Natural killer cell (primary cell): ENCODE measurements at regions of chr4 and their contacts with region 1.

Region 1: DNA sequence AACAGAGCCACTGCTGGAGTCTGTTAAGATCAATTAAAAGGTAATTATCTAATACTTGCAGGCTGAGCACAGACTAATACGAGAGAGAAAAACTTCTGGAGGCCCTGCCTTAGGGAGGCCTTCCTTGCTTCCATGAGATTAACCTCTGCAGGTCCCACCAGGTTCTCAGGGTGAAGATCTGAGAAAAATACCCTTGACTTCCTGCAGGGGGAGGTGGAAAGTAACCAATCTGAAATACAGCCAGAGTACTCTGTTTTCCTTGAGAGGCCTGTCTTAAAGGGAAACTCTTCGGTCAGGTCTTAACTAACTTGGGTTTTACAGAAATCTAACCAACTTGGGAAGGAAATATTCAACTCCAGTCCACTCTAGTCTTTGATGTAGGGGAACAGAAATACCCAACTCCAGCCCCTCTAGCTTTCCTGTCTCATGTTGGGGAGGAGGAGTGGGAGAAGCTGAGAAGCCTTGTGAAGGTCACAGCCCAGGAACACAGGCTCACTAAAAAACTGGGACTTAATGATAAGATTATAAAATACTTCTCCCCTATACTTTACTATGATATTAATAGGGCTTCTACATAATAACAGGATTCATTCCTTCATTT is 77.1 kb downstream of the TBCK start:
- DNase-seq: peak in 1 of 2 donors; percentile 35
- ATAC-seq: peak in 2 of 3 donors; percentile 52 to 53
- H3K4me3 ChIP-seq: no peak overlapping the region
- H3K4me3 Mint-ChIP-seq: no peak overlapping the region
- H3K27ac ChIP-seq: no peak overlapping the region
- H3K27ac Mint-ChIP-seq: no peak overlapping the region
- H3K4me1 ChIP-seq: no peaks in the 10 kb centered on the region
- H3K4me1 Mint-ChIP-seq: no peaks in the 10 kb centered on the region
- H3K27me3 ChIP-seq: no peaks in the 10 kb centered on the region
- H3K27me3 Mint-ChIP-seq: no peaks in the 10 kb centered on the region
- CTCF ChIP-seq: peak; percentile 56

Region 2: GRCh38 chr4:105831189-105831588 is 407.7 kb before region 1 on chr4:
- intact Hi-C with region 1: no loop called
- DNase-seq: no peak
- ATAC-seq: no peak
- H3K4me3 ChIP-seq: no peak overlapping the region
- H3K4me3 Mint-ChIP-seq: no peak overlapping the region
- H3K27ac ChIP-seq: no peak overlapping the region
- H3K27ac Mint-ChIP-seq: no peak overlapping the region
- H3K4me1 ChIP-seq: no peaks in the 10 kb centered on the region
- H3K4me1 Mint-ChIP-seq: peaks cover 0 to under 1% of the 10 kb centered on the region in 2 donors
- H3K27me3 ChIP-seq: no peaks in the 10 kb centered on the region
- H3K27me3 Mint-ChIP-seq: no peaks in the 10 kb centered on the region
- CTCF ChIP-seq: no peak

Region 3: GRCh38 chr4:107736924-107737448 is 1498.1 kb after region 1 on chr4:
- intact Hi-C with region 1: loop called (anchors 10 kb)
- DNase-seq: peak; percentile 21 to 76
- ATAC-seq: peak; percentile 57 to 77 (median 76)
- H3K4me3 ChIP-seq: no peak overlapping the region
- H3K4me3 Mint-ChIP-seq: no peak overlapping the region
- H3K27ac ChIP-seq: no peak overlapping the region
- H3K27ac Mint-ChIP-seq: no peak overlapping the region
- H3K4me1 ChIP-seq: no peaks in the 10 kb centered on the region
- H3K4me1 Mint-ChIP-seq: no peaks in the 10 kb centered on the region
- H3K27me3 ChIP-seq: no peaks in the 10 kb centered on the region
- H3K27me3 Mint-ChIP-seq: peaks cover 6 to 10% of the 10 kb centered on the region in 2 donors
- CTCF ChIP-seq: peak; percentile 80